ENCODE measurements at regions of chr18 and their contacts with region 1.

Region 1: DNA sequence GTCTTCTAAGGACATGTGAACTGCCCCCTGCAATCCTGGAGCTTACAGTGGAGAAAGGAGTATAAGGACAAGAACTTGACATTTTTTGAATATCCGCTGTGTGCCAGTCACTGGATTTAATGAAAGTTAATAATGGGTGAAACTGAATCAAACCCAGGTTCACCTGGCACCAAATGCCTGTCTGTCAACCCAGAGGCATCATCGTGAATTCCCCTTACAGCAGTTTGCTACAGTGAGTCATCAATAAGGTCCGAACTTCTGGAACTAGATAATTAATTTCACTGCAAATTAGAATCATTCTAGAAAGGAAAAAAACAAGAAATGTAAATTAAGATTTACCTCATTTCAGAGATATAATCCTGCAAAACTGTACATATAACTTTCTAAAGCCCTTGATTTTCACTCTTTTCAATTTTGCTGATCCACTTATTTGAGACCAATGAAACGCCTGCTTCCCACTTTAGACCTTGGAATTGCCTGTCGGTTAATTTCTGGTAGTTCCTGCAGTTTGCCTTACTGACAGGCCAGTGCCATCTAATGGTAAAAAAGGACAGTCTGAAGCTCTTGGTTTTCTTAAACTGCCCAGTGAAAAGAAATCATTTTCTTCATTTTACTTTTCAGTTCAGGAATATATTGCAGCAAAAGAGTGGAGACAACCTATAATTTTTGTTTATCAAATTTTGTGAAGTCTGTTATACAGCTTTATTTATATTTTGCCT is 8.2 kb downstream of the DSG2 start:
- DNase-seq: peak in 1 of 4 donors; percentile 6
- ATAC-seq: no peak
- H3K4me3 ChIP-seq: no peak overlapping the region
- H3K27ac ChIP-seq: no peak overlapping the region
- H3K4me1 ChIP-seq: no peaks in the 10 kb centered on the region
- H3K27me3 ChIP-seq: no peaks in the 10 kb centered on the region
- CTCF ChIP-seq: no peak

Region 2: GRCh38 chr18:31301201-31301655 is 205.0 kb before region 1 on chr18:
- intact Hi-C with region 1: loop called in 1 of 2 experiments (anchors 10 kb)
- DNase-seq: no peak
- ATAC-seq: no peak
- H3K4me3 ChIP-seq: no peak overlapping the region
- H3K27ac ChIP-seq: no peak overlapping the region
- H3K4me1 ChIP-seq: no peaks in the 10 kb centered on the region
- H3K27me3 ChIP-seq: no peaks in the 10 kb centered on the region
- CTCF ChIP-seq: no peak

Region 3: DNA sequence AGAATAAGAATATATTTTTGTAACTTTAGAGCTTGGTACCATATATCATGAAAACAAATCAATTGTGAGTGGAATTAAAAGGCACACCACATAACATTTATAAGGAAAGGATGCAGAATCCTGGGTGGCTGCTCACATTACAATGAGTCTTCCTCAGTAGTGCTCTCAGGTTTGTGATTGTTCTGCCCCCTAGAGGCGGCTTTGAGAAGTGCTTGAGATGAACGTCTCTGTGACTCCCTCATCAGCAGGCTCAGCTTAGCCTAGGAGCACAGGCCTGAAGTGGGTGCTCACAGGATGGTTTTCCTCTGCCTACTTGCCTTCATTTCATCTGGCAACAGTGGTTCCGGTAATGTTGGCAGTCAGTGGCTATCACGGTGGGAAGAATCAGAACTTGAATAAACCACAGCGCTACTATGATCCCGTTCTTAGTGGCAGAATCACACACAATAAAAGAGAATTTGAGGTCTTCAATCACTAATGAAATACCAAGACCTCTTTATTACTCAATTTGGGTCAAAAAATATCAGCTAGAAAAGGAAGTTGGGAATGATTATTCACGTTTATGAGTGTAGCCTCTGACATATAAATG is 216.3 kb after region 1 on chr18:
- intact Hi-C with region 1: no loop called
- DNase-seq: peak in 3 of 4 donors; percentile 50 to 79 (median 64)
- ATAC-seq: peak; percentile 97
- H3K4me3 ChIP-seq: no peak overlapping the region
- H3K27ac ChIP-seq: no peak overlapping the region
- H3K4me1 ChIP-seq: peaks cover 4 to 14% of the 10 kb centered on the region in 2 donors
- H3K27me3 ChIP-seq: peaks cover 0 to 30% of the 10 kb centered on the region in 2 donors
- CTCF ChIP-seq: peak; percentile 85 to 92

Measured in left lung (tissue), 14 donors.